BJ (cell line): ENCODE measurements at regions of chr4 and their contacts with region 1.

Region 1: DNA sequence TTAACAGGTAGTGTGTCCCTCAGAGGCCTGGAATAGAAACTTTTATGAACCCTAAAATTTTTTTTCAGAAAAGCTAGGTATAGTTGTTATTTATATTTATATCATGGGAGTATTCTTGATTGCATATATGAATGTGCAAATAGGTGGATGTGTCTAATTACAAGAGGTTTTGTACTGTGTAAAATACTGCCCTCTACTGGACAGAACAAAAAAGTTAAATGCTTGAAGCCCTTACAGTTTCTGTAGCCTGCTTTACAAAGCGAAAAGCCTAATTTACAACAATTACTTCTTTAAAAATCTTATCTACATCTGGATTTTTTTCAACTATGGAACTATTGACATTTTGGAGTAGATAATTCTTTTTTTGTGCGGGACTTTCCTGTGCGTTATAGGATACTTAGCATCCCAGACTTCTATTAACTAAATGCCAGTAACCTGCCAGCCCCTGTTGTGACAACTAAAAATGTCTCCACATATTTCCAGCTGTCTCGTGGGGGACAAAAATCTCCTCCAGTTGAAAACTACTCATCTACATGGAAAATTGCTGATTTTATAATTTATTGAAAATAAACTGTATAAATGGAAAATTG is 35.1 kb downstream of the ENPEP start:
- DNase-seq: no peak
- H3K4me3 ChIP-seq: no peak overlapping the region
- H3K27me3 ChIP-seq: no peaks in the 10 kb centered on the region; the same call in 1 of the 2 replicates
- CTCF ChIP-seq: peak; percentile 54

Region 2: GRCh38 chr4:110005461-110006056 is 505.5 kb before region 1 on chr4:
- CTCF ChIA-PET with region 1: interaction called, 189 read pairs
- POLR2A ChIA-PET with region 1: no interaction called
- DNase-seq: no peak
- H3K4me3 ChIP-seq: no peak overlapping the region
- H3K27me3 ChIP-seq: no peaks in the 10 kb centered on the region
- CTCF ChIP-seq: peak; percentile 69

Region 3: GRCh38 chr4:110310795-110311194 is 200.3 kb before region 1 on chr4:
- CTCF ChIA-PET with region 1: interaction called, 170 read pairs
- POLR2A ChIA-PET with region 1: no interaction called
- DNase-seq: no peak
- H3K4me3 ChIP-seq: no peak overlapping the region
- H3K27me3 ChIP-seq: no peaks in the 10 kb centered on the region
- CTCF ChIP-seq: no peak

Region 4: GRCh38 chr4:110344162-110344561 is 166.9 kb before region 1 on chr4:
- CTCF ChIA-PET with region 1: interaction called, 30 read pairs
- POLR2A ChIA-PET with region 1: no interaction called
- DNase-seq: no peak
- H3K4me3 ChIP-seq: no peak overlapping the region
- H3K27me3 ChIP-seq: no peaks in the 10 kb centered on the region
- CTCF ChIP-seq: 0 out of 2 replicates have a peak, but pooled peaks have one; percentile 22

Region 5: GRCh38 chr4:110475881-110476835 is 34.9 kb before region 1 on chr4 and contains the start of gene ENPEP:
- CTCF ChIA-PET with region 1: interaction called, 13 read pairs
- POLR2A ChIA-PET with region 1: no interaction called
- DNase-seq: no peak
- H3K4me3 ChIP-seq: peak within 1 kb of the TSS; percentile 36
- H3K27me3 ChIP-seq: no peaks in the 10 kb centered on the region
- CTCF ChIP-seq: no peak
- polyA plus RNA-seq, gene ENPEP: 0.40 and 0.75 TPM in 2 replicates

Region 6: GRCh38 chr4:111263836-111264235 is 752.8 kb after region 1 on chr4:
- CTCF ChIA-PET with region 1: no interaction called
- POLR2A ChIA-PET with region 1: no interaction called
- DNase-seq: no peak
- H3K4me3 ChIP-seq: no peak overlapping the region
- H3K27me3 ChIP-seq: 0 out of 2 replicates have a peak, but pooled peaks cover 1% of the 10 kb centered on the region
- CTCF ChIP-seq: no peak